T-cell (primary cell): ENCODE measurements at regions of chr4 and their contacts with region 1.

Region 1: GRCh38 chr4:37768522-37768921 is 58.0 kb upstream of the PGM2 start:
- DNase-seq: no peak
- ATAC-seq: no peak
- H3K4me3 ChIP-seq: no peak overlapping the region
- H3K4me3 Mint-ChIP-seq: no peak overlapping the region
- H3K27ac ChIP-seq: no peak overlapping the region
- H3K27ac Mint-ChIP-seq: no peak overlapping the region
- H3K4me1 ChIP-seq: peaks cover 0 to 6% of the 10 kb centered on the region in 2 experiments
- H3K4me1 Mint-ChIP-seq: peaks cover 0 to 18% (median 5%) of the 10 kb centered on the region in 3 donors
- H3K27me3 ChIP-seq: no peaks in the 10 kb centered on the region
- H3K27me3 Mint-ChIP-seq: no peaks in the 10 kb centered on the region

Region 2: DNA sequence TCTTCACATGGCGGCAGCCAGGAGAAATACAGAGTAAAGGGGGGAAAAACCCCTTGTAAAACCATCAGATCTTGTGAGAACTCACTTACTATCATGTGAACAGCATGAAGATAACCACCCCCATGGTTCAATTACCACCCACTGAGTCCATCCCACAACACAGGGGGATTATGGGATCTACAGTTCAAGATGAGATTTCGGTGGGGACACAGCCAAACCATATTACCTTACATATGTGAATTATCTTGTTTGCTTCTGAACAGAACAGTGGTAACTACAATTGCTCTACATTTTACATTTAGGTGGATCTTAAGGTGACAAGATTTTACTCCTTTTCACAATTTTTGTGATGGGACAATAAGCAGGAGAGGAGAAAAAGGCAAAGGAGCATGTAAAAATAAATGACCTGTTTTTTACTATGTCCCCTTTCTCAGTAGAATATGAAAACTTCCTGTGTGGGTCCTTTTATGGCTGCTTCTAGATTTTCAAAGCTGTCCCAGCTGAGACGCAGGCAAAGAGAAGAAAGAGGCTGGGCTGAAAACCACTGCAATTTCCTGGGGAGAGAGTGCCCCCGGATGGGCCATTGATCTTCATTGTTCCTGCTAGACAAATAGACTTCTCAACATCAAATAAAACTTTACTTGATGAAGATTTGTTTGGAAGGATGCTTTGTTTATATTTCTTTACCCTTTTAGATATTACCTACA is 12.1 kb after region 1 on chr4:
- CTCF ChIA-PET with region 1: interaction called in 1 of 2 experiments, 6 read pairs
- POLR2A ChIA-PET with region 1: interaction called in 1 of 2 experiments, 10 read pairs
- DNase-seq: peak; percentile 40 to 86 (median 68)
- ATAC-seq: peak; percentile 97 to 100 (median 99)
- H3K4me3 ChIP-seq: no peak overlapping the region
- H3K4me3 Mint-ChIP-seq: peak overlapping the region in 1 of 3 donors; percentile 73
- H3K27ac ChIP-seq: peak overlapping the region; percentile 48
- H3K27ac Mint-ChIP-seq: peak overlapping the region; percentile 94 to 97
- H3K4me1 ChIP-seq: peaks cover 18 to 22% of the 10 kb centered on the region in 2 experiments
- H3K4me1 Mint-ChIP-seq: peaks cover 24 to 28% (median 26%) of the 10 kb centered on the region in 3 donors
- H3K27me3 ChIP-seq: no peaks in the 10 kb centered on the region
- H3K27me3 Mint-ChIP-seq: no peaks in the 10 kb centered on the region